Psoas muscle (tissue), 8 donors: ENCODE measurements at regions of chr2 and their contacts with region 1.

Region 1: DNA sequence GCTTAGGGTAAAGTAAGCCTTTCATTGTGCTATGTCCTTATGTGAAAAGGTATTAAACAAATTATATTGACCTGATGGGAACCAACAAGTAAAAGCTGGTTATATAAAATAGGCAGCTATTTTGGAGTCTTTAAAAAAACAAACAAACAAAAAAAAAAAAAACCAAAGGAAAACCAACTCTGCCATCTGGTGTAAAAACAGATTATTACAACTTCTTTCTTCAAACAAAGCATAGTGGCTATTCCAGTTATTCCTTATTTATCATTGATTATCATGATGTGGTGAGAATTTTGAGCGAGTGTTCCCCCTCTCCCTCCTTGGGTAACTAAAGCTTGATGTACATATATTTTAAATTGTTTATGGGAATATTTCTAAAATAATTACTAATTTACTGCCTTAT is 122.4 kb upstream of the FHL2 start:
- DNase-seq: no peak
- ATAC-seq: peak in 1 of 4 donors; percentile 27
- H3K4me3 ChIP-seq: no peak overlapping the region
- H3K27ac ChIP-seq: no peak overlapping the region
- H3K4me1 ChIP-seq: peaks cover 25% of the 10 kb centered on the region
- H3K27me3 ChIP-seq: no peaks in the 10 kb centered on the region
- CTCF ChIP-seq: peak; percentile 72

Region 2: DNA sequence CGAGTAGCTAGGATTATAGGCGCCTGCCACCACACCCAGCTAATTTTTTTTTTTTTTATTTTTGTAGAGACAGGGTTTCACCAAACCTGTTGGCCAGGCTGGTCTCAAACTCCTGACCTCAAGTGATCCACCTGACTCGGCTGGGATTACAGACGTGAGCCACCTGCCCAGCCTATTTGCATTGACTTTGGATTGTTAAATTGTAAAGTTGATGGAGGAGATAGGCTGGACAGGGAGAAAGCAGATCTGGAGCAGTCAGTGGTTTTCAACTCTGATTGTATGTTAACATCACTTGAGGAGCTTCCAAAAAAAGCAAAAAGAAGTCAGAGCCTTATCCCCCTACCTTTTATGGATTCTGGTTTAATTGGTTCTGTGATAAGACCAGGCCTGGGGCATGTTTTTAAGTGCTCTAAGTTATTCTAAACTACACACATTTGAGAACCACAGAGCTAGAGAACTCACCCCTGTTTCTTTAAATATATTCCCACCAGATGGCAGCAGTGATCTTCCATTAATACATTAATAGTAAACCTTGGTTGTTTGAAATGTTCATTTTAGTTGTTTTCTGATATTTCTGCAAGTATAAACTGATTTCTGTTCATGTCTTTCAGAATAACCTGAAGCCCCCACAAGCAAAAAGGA is 176.4 kb before region 1 on chr2:
- intact Hi-C with region 1: loop called in 1 of 2 experiments (anchors 2 kb)
- DNase-seq: no peak
- ATAC-seq: peak in 2 of 4 donors; percentile 63 to 75
- H3K4me3 ChIP-seq: no peak overlapping the region
- H3K27ac ChIP-seq: no peak overlapping the region
- H3K4me1 ChIP-seq: no peaks in the 10 kb centered on the region
- H3K27me3 ChIP-seq: no peaks in the 10 kb centered on the region
- CTCF ChIP-seq: peak; percentile 46

Region 3: GRCh38 chr2:105369747-105370690 is 151.2 kb before region 1 on chr2:
- intact Hi-C with region 1: loop called (anchors 1 to 2 kb)
- DNase-seq: peak; percentile 85 to 93
- ATAC-seq: peak; percentile 76 to 79 (median 78)
- H3K4me3 ChIP-seq: no peak overlapping the region
- H3K27ac ChIP-seq: no peak overlapping the region
- H3K4me1 ChIP-seq: peaks cover 22% of the 10 kb centered on the region
- H3K27me3 ChIP-seq: no peaks in the 10 kb centered on the region
- CTCF ChIP-seq: peak; percentile 92

Region 4: GRCh38 chr2:105454801-105455485 is 66.3 kb before region 1 on chr2:
- intact Hi-C with region 1: loop called in 1 of 2 experiments (anchors 2 kb)
- DNase-seq: no peak
- ATAC-seq: peak; percentile 20 to 34 (median 28)
- H3K4me3 ChIP-seq: no peak overlapping the region
- H3K27ac ChIP-seq: peak overlapping the region; percentile 64
- H3K4me1 ChIP-seq: peaks cover 13% of the 10 kb centered on the region
- H3K27me3 ChIP-seq: no peaks in the 10 kb centered on the region
- CTCF ChIP-seq: no peak